ENCODE measurements at regions of chr14 and their contacts with region 1.

Region 1: GRCh38 chr14:89509891-89510290 is 92.9 kb upstream of the FOXN3 start:
- DNase-seq: no peak
- ATAC-seq: no peak
- H3K4me3 ChIP-seq: no peak overlapping the region
- H3K4me3 Mint-ChIP-seq: peak overlapping the region in 2 of 3 donors; percentile 75 to 85
- H3K27ac ChIP-seq: peak overlapping the region; percentile 60
- H3K27ac Mint-ChIP-seq: peak overlapping the region; percentile 93 to 95
- H3K4me1 ChIP-seq: peaks cover 9 to 44% of the 10 kb centered on the region in 2 experiments
- H3K4me1 Mint-ChIP-seq: peaks cover 68 to 72% (median 70%) of the 10 kb centered on the region in 3 donors
- H3K27me3 ChIP-seq: no peaks in the 10 kb centered on the region
- H3K27me3 Mint-ChIP-seq: no peaks in the 10 kb centered on the region

Region 2: DNA sequence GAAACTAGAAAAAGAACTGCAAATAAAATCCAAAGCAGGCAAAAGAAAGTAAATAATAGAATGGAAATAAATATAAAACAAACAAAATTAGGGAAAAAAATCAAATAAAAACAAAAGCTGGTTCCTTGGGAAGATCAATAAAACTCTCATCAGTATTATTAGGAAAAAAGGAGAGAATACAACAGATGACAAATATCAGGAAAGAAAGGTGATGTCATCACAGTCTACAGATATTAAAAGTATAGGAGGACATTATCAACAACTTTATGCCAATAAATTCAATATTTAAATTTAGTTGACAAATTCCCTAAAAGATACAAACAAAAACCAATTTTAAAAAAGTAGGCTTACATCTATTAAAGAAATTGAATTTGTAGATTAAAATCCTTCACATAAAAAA is 14.5 kb after region 1 on chr14:
- CTCF ChIA-PET with region 1: no interaction called
- POLR2A ChIA-PET with region 1: interaction called in 1 of 2 experiments, 12 read pairs
- DNase-seq: no peak
- ATAC-seq: no peak
- H3K4me3 ChIP-seq: no peak overlapping the region
- H3K4me3 Mint-ChIP-seq: no peak overlapping the region
- H3K27ac ChIP-seq: no peak overlapping the region
- H3K27ac Mint-ChIP-seq: no peak overlapping the region
- H3K4me1 ChIP-seq: peaks cover 0 to 3% of the 10 kb centered on the region in 2 experiments
- H3K4me1 Mint-ChIP-seq: peaks cover 45 to 52% (median 49%) of the 10 kb centered on the region in 3 donors
- H3K27me3 ChIP-seq: no peaks in the 10 kb centered on the region
- H3K27me3 Mint-ChIP-seq: no peaks in the 10 kb centered on the region

Measured in T-cell (primary cell).